ENCODE measurements at regions of chr14 and their contacts with region 1.

Region 1: DNA sequence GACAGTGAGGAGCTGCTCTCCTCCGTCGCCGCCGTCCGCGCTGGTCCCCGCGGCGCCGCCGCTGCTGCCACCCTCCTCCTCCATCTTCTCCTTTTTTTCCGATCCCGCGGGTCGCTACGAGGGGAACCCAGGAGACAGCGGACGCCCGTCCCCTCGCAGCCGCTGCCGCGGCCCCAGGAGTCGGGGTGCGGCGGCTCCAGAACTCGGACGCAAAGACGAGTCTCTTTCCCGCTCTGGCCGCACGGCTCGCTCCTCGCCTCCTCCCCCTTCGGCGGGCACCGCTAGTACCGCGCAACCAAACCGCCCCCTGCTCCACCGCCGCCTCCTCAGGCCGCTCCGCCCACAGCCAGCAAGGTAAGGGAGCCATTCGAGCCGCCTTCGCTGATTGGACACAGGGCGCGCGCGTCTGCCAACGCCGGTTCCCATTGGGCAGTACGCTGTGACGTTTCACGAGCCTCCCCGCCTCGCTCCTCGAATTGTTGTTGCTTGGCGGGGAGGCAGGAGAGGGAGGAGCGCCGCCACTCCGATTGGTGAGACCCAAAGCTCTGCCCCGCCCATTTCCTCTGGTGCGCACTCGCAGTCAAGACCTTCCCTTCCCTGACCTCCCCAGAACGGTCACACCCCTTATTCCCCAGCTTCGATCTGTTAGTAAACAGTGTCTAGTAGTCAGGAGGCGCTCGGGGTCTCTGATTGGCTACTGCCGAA is at the start of gene RPS6KA5:
- DNase-seq: peak; percentile 100
- H3K4me3 Mint-ChIP-seq: peak within 1 kb of the TSS; percentile 82
- H3K27ac Mint-ChIP-seq: peak within 1 kb of the TSS; percentile 26
- H3K4me1 Mint-ChIP-seq: peaks cover 44% of the 10 kb centered on the region
- H3K27me3 Mint-ChIP-seq: no peaks in the 10 kb centered on the region
- total RNA-seq, gene RPS6KA5: 10.0 to 12.0 TPM

Region 2: GRCh38 chr14:90399541-90400444 is 660.7 kb before region 1 on chr14:
- CTCF ChIA-PET with region 1: no interaction called
- intact Hi-C with region 1: loop called (anchors 1 kb)
- DNase-seq: peak; percentile 93
- H3K4me3 Mint-ChIP-seq: peak overlapping the region; percentile 96
- H3K27ac Mint-ChIP-seq: peak overlapping the region; percentile 97
- H3K4me1 Mint-ChIP-seq: peaks cover 52% of the 10 kb centered on the region
- H3K27me3 Mint-ChIP-seq: no peaks in the 10 kb centered on the region

Region 3: DNA sequence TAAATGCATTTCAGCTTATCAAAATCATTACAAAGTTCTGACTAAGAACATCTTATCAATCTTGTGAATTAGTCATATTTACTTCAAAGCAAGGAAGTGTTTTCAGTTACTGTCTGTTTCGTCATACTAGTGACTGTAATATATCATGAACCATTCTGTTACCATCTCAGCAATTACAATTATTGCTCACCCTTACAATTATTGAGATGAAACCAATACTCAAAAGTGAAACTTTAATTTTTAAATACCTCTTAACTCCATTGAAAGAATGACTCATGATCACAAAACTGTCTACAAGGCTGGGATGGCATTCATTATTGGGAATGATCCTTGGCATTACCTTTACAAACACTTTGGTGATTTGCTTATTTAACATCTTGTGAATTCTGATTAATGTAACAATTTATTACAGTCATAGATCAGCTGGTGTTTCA is 90.3 kb before region 1 on chr14:
- CTCF ChIA-PET with region 1: interaction called, 3 read pairs
- intact Hi-C with region 1: loop called (anchors 1 kb)
- DNase-seq: no peak
- H3K4me3 Mint-ChIP-seq: peak overlapping the region; percentile 47
- H3K27ac Mint-ChIP-seq: peak overlapping the region; percentile 88
- H3K4me1 Mint-ChIP-seq: peaks cover 41% of the 10 kb centered on the region
- H3K27me3 Mint-ChIP-seq: no peaks in the 10 kb centered on the region

Region 4: DNA sequence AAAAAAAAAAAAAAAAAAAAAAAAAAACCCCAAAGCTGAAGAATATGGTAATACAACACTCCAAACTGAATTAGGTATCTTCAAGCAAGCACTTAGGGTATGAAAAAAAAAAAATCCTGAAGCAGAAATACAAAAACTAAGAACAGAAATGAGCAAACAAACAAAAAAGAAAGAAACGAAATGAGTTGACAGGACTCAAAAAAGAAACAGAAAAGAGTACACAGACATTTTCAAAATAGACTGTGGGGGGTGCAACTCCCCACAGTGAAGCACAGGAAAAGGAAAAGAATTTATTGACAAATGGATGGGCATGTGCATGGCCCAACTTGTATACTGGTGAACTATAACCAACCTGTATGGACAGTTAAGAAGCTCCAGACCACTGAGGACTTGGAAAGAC is 24.6 kb before region 1 on chr14:
- CTCF ChIA-PET with region 1: interaction called, 5 read pairs
- intact Hi-C with region 1: loop called (anchors 1 kb)
- DNase-seq: peak; percentile 34
- H3K4me3 Mint-ChIP-seq: no peak overlapping the region
- H3K27ac Mint-ChIP-seq: peak overlapping the region; percentile 68
- H3K4me1 Mint-ChIP-seq: peaks cover 66% of the 10 kb centered on the region
- H3K27me3 Mint-ChIP-seq: no peaks in the 10 kb centered on the region

Region 5: DNA sequence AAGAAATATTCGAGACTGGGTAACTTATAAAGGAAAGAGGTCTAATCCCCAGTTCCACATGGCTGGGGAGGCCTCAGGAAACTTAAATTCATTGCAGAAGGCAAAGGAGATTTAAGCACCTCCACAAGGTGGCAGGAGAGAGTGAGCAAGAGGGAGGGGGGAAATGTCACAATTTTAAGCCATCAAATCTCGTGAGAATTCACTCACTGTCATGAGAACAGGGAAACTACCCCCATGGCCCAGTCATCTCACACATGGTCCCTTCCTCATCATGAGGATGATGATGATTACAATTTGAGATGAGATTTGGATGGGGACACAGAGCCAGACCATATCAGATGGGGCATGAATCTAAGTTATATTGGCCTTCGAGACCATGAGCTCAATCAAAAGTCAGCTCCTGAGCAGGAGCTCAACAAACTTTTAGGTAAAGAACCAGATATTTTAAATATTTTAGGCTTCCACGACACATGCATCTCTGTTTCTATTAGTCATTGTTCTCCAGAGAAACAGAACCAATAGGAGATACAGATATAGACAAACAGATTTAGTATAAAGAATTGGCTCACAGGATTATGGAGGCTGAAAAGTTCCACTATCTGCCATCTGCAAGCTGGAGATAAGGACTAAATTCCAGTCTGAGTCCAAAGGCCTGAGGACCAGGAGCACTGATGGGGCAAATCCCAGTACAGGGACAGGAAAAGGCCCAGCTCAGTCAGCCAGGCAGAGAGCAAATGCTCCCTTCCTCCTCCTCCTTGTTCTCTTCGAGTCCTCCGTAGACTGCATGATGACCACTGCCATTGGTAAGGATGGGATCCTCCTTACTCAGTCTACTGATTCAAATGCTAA is 78.2 kb after region 1 on chr14:
- CTCF ChIA-PET with region 1: interaction called, 4 read pairs
- intact Hi-C with region 1: loop called (anchors 1 kb)
- DNase-seq: peak; percentile 80
- H3K4me3 Mint-ChIP-seq: no peak overlapping the region
- H3K27ac Mint-ChIP-seq: peak overlapping the region; percentile 59
- H3K4me1 Mint-ChIP-seq: peaks cover 43% of the 10 kb centered on the region
- H3K27me3 Mint-ChIP-seq: no peaks in the 10 kb centered on the region

Region 6: DNA sequence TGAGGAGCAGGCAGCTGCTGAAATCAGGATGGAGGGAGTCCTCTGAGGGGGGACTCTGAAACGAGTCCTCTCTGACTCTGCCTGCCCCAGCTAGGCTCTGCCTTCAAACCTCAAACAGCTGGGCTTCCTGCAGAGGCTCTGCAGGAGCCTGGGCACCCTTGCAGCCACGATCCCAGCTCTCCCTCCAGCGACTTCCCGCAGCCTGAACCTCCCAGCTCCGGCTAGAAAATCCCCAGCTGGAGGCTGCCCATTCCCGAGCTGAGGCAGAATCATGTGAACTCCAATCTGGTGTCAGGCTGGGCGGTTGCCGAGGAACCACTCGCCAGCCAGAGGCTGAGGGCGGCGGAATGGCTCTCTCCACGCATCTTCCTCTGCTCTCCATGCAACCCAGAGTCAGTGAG is 184.0 kb after region 1 on chr14 and contains the start of gene GPR68:
- CTCF ChIA-PET with region 1: no interaction called
- intact Hi-C with region 1: loop called (anchors 2 kb)
- DNase-seq: peak; percentile 39
- H3K4me3 Mint-ChIP-seq: peak within 1 kb of the TSS; percentile 55
- H3K27ac Mint-ChIP-seq: peak within 1 kb of the TSS; percentile 97
- H3K4me1 Mint-ChIP-seq: peaks cover 81% of the 10 kb centered on the region
- H3K27me3 Mint-ChIP-seq: no peaks in the 10 kb centered on the region
- total RNA-seq, gene GPR68: 1.2 to 1.3 TPM

Region 7: DNA sequence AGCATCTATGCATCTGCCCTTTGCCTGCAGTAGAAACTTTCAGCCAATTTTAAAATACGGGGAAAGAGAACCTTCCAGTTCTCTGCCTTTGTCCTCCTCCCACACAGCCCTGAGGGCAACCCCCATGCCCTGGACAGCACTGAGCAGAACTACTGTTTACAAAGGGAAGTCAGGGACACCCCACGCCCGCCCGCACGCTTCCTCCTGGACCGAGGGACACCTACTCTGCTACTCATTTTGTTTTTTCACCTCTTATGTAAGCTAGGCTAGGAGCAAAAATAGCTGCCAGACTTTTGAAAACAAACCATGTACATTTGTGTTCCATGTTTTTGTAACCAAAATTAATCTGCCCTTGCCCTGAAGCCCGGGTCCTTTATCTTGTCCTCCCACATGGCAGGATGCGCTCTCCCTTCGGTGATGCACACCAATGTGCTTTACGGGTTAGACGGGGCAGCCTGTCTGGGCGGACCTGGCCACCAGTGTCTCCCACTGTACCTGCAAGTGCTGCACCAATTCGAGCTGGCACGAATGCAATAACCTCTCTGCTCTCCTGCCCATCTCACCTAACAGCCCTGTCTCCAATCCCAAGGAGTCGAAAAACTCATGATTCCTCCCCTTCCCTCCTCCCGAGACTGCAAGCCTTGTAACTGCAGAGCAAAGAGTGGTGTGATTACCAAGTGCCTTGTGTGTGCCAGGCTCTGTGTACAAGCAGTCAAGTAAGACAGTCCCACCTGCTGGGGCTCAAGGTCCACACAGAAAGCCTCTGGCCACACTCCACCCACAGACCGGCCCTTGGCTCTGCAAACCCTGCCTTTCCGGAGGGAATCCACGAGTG is 271.9 kb after region 1 on chr14:
- CTCF ChIA-PET with region 1: no interaction called
- intact Hi-C with region 1: no loop called
- DNase-seq: no peak
- H3K4me3 Mint-ChIP-seq: no peak overlapping the region
- H3K27ac Mint-ChIP-seq: peak overlapping the region; percentile 70
- H3K4me1 Mint-ChIP-seq: peaks cover 73% of the 10 kb centered on the region
- H3K27me3 Mint-ChIP-seq: no peaks in the 10 kb centered on the region

Region 8: DNA sequence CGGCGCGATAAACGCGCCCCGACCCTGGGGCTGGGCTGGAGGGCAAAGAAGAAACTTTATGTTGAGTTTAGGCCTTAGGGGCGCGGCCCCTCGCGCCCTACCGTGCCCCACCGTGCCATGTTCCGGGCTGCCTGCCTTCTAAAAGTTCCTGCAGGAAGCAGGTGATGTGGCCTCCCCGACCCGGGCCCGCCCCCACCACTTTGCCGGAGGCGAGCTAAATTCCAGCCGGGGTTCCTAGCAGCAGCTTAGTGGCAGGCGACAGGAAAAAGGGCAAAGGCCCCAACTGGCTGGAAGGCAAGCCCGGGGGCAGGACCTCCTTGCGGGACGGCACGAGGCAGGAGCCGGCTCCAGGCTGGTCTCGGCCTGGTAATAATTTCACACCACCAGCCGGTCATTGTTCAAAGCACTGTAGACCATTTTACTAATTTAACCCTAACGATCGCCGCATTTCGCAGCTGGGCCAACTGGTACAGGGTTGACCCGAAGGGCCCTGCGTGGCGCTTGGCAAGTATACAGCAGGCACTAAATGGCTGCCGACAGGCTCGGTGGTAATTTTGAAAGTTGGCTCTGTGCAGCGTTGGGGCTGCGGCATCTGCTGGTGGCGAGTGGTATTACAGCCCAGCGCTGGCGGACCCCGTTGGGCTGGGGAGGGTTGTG is 358.0 kb after region 1 on chr14:
- CTCF ChIA-PET with region 1: no interaction called
- intact Hi-C with region 1: loop called (anchors 2 kb)
- DNase-seq: peak; percentile 84
- H3K4me3 Mint-ChIP-seq: peak overlapping the region; percentile 64
- H3K27ac Mint-ChIP-seq: peak overlapping the region; percentile 74
- H3K4me1 Mint-ChIP-seq: peaks cover 32% of the 10 kb centered on the region
- H3K27me3 Mint-ChIP-seq: no peaks in the 10 kb centered on the region

Region 9: GRCh38 chr14:91554535-91555332 is 494.2 kb after region 1 on chr14:
- CTCF ChIA-PET with region 1: no interaction called
- intact Hi-C with region 1: no loop called
- DNase-seq: no peak
- H3K4me3 Mint-ChIP-seq: no peak overlapping the region
- H3K27ac Mint-ChIP-seq: no peak overlapping the region
- H3K4me1 Mint-ChIP-seq: no peaks in the 10 kb centered on the region
- H3K27me3 Mint-ChIP-seq: no peaks in the 10 kb centered on the region